ENCODE measurements at regions of chr10 and their contacts with region 1.

Region 1: GRCh38 chr10:63313066-63313717 is 152.6 kb downstream of the JMJD1C start:
- DNase-seq: no peak
- H3K4me3 ChIP-seq: no peak overlapping the region
- H3K27ac ChIP-seq: no peak overlapping the region
- H3K4me1 ChIP-seq: no peaks in the 10 kb centered on the region
- H3K27me3 ChIP-seq: no peaks in the 10 kb centered on the region
- CTCF ChIP-seq: no peak

Region 2: GRCh38 chr10:63217120-63217605 is 96.0 kb before region 1 on chr10:
- CTCF ChIA-PET with region 1: no interaction called
- POLR2A ChIA-PET with region 1: no interaction called
- intact Hi-C with region 1: no loop called
- DNase-seq: peak in 1 of 2 experiments; percentile 64
- H3K4me3 ChIP-seq: no peak overlapping the region
- H3K27ac ChIP-seq: peak overlapping the region; percentile 0; the same call in 1 of the 2 replicates
- H3K4me1 ChIP-seq: no peaks in the 10 kb centered on the region
- H3K27me3 ChIP-seq: no peaks in the 10 kb centered on the region
- CTCF ChIP-seq: peak; percentile 91

Region 3: DNA sequence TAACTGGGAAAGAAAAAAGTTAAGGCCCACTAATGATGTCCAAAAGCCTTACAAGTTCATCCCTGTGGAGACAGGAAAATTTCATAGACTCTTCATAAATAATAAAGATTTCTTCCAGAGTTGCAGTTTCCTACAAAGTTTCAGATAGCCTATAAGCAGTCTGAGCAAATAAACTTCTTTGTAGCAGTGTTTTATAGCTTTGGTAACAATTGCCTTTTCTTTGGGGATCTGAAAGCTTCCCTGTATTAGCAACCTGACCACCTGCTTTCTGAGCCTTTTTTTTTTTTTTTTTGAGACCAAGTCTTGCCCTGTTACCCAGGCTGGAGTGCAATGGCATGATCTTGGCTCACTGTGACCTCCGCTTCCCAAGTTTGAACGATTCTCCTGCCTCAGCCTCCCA is 30.1 kb before region 1 on chr10:
- CTCF ChIA-PET with region 1: no interaction called
- POLR2A ChIA-PET with region 1: interaction called, 11 read pairs
- intact Hi-C with region 1: no loop called
- DNase-seq: no peak
- H3K4me3 ChIP-seq: no peak overlapping the region
- H3K27ac ChIP-seq: no peak overlapping the region
- H3K4me1 ChIP-seq: peaks cover 10% of the 10 kb centered on the region
- H3K27me3 ChIP-seq: no peaks in the 10 kb centered on the region
- CTCF ChIP-seq: no peak

Region 4: DNA sequence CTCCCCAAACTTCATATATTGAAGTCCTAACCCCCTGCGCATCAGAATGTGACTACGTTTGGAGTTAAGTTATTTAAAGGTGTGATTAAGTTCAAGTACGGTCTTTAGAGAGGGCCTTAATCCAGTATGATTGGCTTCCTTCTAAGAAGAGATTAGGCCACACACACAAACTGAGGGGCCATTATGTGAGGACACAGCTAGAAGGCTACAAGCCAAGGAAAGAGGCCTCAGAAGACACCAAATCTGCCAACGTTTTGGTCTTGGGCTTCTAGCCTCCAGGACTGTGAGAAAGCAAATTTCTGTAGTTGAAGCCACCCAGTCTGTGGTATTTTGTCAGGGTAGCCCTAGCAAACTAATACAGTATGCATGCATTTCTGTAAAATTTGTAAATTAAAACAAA is 249.7 kb after region 1 on chr10:
- CTCF ChIA-PET with region 1: no interaction called
- POLR2A ChIA-PET with region 1: no interaction called
- intact Hi-C with region 1: no loop called
- DNase-seq: no peak
- H3K4me3 ChIP-seq: no peak overlapping the region
- H3K27ac ChIP-seq: no peak overlapping the region
- H3K4me1 ChIP-seq: no peaks in the 10 kb centered on the region
- H3K27me3 ChIP-seq: no peaks in the 10 kb centered on the region
- CTCF ChIP-seq: no peak

Measured in PC-9 (cell line).